GM13976 (cell line): ENCODE measurements at regions of chr12 and their contacts with region 1.

Region 1: DNA sequence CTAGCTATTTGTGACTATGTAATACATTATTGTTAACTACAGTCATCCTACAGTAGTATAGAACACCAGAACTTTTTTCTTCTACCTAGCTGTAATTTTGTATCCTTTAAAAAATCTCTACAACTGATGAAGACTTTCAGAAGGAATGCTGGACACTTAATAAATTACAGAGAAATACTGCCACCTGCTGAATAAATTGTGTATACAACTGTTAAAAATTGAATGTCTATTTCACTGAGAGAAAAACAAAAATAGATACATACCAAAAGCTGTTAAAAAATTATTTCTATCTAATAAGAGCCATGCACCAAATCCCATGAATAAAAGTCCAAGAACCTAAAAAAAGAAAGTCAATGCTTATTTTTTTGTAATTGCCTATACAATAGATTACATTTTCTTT is 6.6 kb downstream of the TSPAN19 start:
- DNase-seq: peak; percentile 10
- CTCF ChIP-seq: no peak

Region 2: GRCh38 chr12:83769151-83769550 is 1260.3 kb before region 1 on chr12:
- in situ Hi-C with region 1: no loop called
- DNase-seq: no peak
- CTCF ChIP-seq: no peak

Region 3: GRCh38 chr12:84874125-84874824 is 155.2 kb before region 1 on chr12:
- in situ Hi-C with region 1: loop called (anchors 10 kb)
- DNase-seq: peak; percentile 32
- CTCF ChIP-seq: peak; percentile 57